ENCODE measurements at regions of chr15 and their contacts with region 1.

Region 1: GRCh38 chr15:63048115-63048775 is 5.7 kb downstream of the TPM1 start:
- DNase-seq: peak; percentile 83 to 93
- ATAC-seq: peak; percentile 86 to 92 (median 87)
- H3K4me3 ChIP-seq: peak overlapping the region; percentile 61
- H3K4me3 Mint-ChIP-seq: peak overlapping the region; percentile 96
- H3K27ac ChIP-seq: peak overlapping the region; percentile 51
- H3K27ac Mint-ChIP-seq: peak overlapping the region; percentile 77 to 85
- H3K4me1 ChIP-seq: peaks cover 22% of the 10 kb centered on the region
- H3K4me1 Mint-ChIP-seq: peaks cover 39% of the 10 kb centered on the region in 2 donors
- H3K27me3 ChIP-seq: peaks cover 30% of the 10 kb centered on the region
- H3K27me3 Mint-ChIP-seq: peaks cover 35 to 36% of the 10 kb centered on the region in 2 donors
- CTCF ChIP-seq: peak; percentile 98

Region 2: GRCh38 chr15:63063164-63063756 is 15.0 kb after region 1 on chr15:
- intact Hi-C with region 1: no loop called
- DNase-seq: no peak
- ATAC-seq: no peak
- H3K4me3 ChIP-seq: no peak overlapping the region
- H3K4me3 Mint-ChIP-seq: no peak overlapping the region
- H3K27ac ChIP-seq: no peak overlapping the region
- H3K27ac Mint-ChIP-seq: no peak overlapping the region
- H3K4me1 ChIP-seq: no peaks in the 10 kb centered on the region
- H3K4me1 Mint-ChIP-seq: peaks cover 5 to 10% of the 10 kb centered on the region in 2 donors
- H3K27me3 ChIP-seq: no peaks in the 10 kb centered on the region
- H3K27me3 Mint-ChIP-seq: no peaks in the 10 kb centered on the region
- CTCF ChIP-seq: no peak

Region 3: GRCh38 chr15:63288778-63289378 is 240.6 kb after region 1 on chr15:
- intact Hi-C with region 1: loop called (anchors 10 kb)
- DNase-seq: peak in 1 of 2 donors; percentile 73
- ATAC-seq: peak; percentile 69 to 78 (median 77)
- H3K4me3 ChIP-seq: no peak overlapping the region
- H3K4me3 Mint-ChIP-seq: no peak overlapping the region
- H3K27ac ChIP-seq: no peak overlapping the region
- H3K27ac Mint-ChIP-seq: peak overlapping the region in 1 of 2 donors; percentile 54
- H3K4me1 ChIP-seq: no peaks in the 10 kb centered on the region
- H3K4me1 Mint-ChIP-seq: peaks cover 6 to 7% of the 10 kb centered on the region in 2 donors
- H3K27me3 ChIP-seq: no peaks in the 10 kb centered on the region
- H3K27me3 Mint-ChIP-seq: no peaks in the 10 kb centered on the region
- CTCF ChIP-seq: peak; percentile 67

Measured in natural killer cell (primary cell).